Transverse colon (tissue), 4 donors: ENCODE measurements at regions of chr5 and their contacts with region 1.

Region 1: GRCh38 chr5:14628346-14628745 is 36.2 kb upstream of the OTULIN start:
- DNase-seq: no peak
- H3K4me3 ChIP-seq: no peak overlapping the region
- H3K27ac ChIP-seq: no peak overlapping the region
- H3K4me1 ChIP-seq: no peaks in the 10 kb centered on the region
- H3K27me3 ChIP-seq: no peaks in the 10 kb centered on the region
- CTCF ChIP-seq: no peak
- EP300 ChIP-seq: no peak
- POLR2A ChIP-seq: no peak

Region 2: GRCh38 chr5:14011089-14012004 is 617.0 kb before region 1 on chr5:
- in situ Hi-C with region 1: no loop called
- intact Hi-C with region 1: loop called (anchors 2 kb)
- DNase-seq: peak; percentile 84
- H3K4me3 ChIP-seq: peak overlapping the region; percentile 14 to 54 (median 43)
- H3K27ac ChIP-seq: peak overlapping the region; percentile 51 to 74 (median 65)
- H3K4me1 ChIP-seq: peaks cover 0 to 20% (median 11%) of the 10 kb centered on the region in 4 donors
- H3K27me3 ChIP-seq: no peaks in the 10 kb centered on the region
- CTCF ChIP-seq: no peak
- EP300 ChIP-seq: no peak
- POLR2A ChIP-seq: no peak

Region 3: GRCh38 chr5:14351845-14352712 is 276.3 kb before region 1 on chr5:
- in situ Hi-C with region 1: loop called in 2 of 4 experiments (anchors 25 kb)
- intact Hi-C with region 1: no loop called
- DNase-seq: peak; percentile 66
- H3K4me3 ChIP-seq: no peak overlapping the region
- H3K27ac ChIP-seq: no peak overlapping the region
- H3K4me1 ChIP-seq: peaks cover 0 to 4% (median 0%) of the 10 kb centered on the region in 4 donors
- H3K27me3 ChIP-seq: no peaks in the 10 kb centered on the region
- CTCF ChIP-seq: peak; percentile 79 to 95 (median 95)
- EP300 ChIP-seq: no peak
- POLR2A ChIP-seq: no peak

Region 4: GRCh38 chr5:14399054-14399692 is 229.2 kb before region 1 on chr5:
- in situ Hi-C with region 1: loop called in 2 of 4 experiments (anchors 25 kb)
- intact Hi-C with region 1: no loop called
- DNase-seq: no peak
- H3K4me3 ChIP-seq: no peak overlapping the region
- H3K27ac ChIP-seq: no peak overlapping the region
- H3K4me1 ChIP-seq: no peaks in the 10 kb centered on the region
- H3K27me3 ChIP-seq: no peaks in the 10 kb centered on the region
- CTCF ChIP-seq: peak; percentile 51 to 66 (median 60)
- EP300 ChIP-seq: no peak
- POLR2A ChIP-seq: no peak